Ovary (tissue), 10 donors: ENCODE measurements at regions of chr12 and their contacts with region 1.

Region 1: DNA sequence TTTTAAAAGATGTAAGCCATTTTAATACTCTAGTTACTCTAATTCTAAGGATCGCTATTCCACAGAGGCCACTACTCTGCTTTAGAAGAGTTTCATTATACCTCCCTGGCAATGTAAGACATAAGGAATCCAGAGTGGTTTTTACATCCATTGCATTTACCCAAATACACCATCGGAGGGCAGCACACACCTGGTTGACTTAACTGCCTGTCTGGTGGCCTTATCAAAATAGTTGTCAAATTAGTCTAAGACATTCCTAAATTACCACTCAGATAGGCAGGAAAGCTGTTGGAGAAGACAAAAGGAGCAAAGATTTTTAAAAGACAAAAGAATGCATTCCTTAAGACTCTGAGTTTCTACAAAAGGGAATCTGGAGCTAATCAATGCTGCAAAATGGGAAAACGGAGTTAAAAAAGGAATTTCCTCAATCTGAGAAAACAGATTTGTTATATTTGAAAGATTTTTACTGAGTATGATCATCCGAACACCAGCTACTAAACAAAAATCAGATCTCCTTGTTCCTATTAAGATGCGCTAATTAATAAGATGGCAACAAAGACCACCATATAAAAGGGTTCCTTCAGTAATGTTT is 33.8 kb upstream of the FGD4 start:
- DNase-seq: peak in 3 of 5 donors; percentile 33 to 61 (median 50)
- H3K4me3 ChIP-seq: no peak overlapping the region
- H3K27ac ChIP-seq: no peak overlapping the region
- H3K4me1 ChIP-seq: no peaks in the 10 kb centered on the region
- H3K27me3 ChIP-seq: no peaks in the 10 kb centered on the region
- CTCF ChIP-seq: peak; percentile 65 to 86 (median 73)
- EP300 ChIP-seq: no peak
- POLR2A ChIP-seq: no peak

Region 2: DNA sequence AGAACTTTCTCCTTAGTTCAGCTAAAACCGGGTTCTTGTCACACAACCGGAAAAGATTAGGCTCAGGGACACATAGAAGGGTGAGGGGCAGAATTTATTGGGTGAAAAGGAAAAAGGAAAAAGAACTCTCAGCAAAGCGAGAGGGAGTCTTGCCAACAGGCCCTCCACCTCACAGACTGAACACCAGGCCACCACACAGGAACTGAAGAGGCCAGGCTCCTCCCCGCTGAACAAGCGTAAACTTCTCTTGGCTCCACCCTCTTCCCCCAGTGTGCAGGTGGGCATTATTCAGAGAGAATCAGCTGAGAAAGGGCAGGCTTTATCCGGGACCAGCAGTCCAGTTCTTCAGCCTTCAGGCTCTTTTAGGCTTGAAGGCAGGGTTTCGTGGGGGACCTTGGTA is 91.9 kb before region 1 on chr12:
- intact Hi-C with region 1: no loop called
- DNase-seq: no peak
- H3K4me3 ChIP-seq: no peak overlapping the region
- H3K27ac ChIP-seq: no peak overlapping the region
- H3K4me1 ChIP-seq: peaks cover 6% of the 10 kb centered on the region
- H3K27me3 ChIP-seq: no peaks in the 10 kb centered on the region
- CTCF ChIP-seq: no peak
- EP300 ChIP-seq: no peak
- POLR2A ChIP-seq: no peak

Region 3: DNA sequence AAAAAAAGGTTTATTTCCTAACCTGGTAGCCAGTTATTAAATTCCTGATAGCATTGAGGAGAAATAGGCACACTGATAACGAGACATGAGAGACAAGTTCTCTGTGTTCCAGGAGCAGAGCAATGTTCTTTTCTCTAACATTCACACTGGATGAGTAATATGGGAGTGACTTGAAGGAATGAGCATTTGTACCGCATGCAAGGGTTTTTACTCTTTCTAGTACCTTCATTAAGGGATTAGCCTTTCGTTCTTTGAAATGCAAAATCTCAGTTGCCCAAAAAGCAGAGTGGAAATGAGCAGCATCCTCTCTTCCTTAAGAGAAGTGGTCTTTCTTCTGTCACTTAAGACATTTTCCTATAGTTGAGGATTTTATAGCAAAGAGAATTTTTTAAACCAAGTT is 88.5 kb after region 1 on chr12:
- intact Hi-C with region 1: loop called in 1 of 4 experiments (anchors 5 kb)
- DNase-seq: no peak
- H3K4me3 ChIP-seq: no peak overlapping the region
- H3K27ac ChIP-seq: peak overlapping the region in 1 of 2 donors; percentile 57
- H3K4me1 ChIP-seq: no peaks in the 10 kb centered on the region
- H3K27me3 ChIP-seq: no peaks in the 10 kb centered on the region
- CTCF ChIP-seq: no peak
- EP300 ChIP-seq: no peak
- POLR2A ChIP-seq: no peak

Region 4: DNA sequence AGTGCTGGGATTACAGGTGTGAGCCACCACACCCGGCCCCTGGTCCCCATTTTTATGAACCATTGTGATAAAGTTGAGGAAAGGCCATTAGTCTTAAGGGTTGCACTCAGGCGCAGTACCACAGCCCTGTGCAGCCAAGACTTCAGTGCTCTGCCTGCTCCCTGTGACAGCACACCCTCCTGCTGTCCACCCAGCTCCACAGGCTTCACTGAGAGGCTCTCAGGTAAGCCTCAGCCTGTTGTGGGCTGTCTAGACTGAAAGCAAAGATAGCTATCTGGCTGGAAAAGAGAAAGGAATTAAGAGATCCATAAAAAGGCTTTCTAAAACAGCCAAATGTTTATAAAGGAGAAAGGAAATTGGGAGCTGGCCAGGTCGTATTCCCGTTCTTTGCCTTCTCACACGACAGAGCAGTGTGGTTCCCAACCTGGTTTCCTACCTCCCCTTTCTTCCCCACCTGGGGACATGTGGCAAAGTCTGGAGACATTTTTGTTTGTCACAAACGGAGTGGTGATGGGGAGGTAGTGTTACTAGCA is 294.4 kb after region 1 on chr12:
- intact Hi-C with region 1: loop called in 2 of 4 experiments (anchors 5 to 10 kb)
- DNase-seq: no peak
- H3K4me3 ChIP-seq: no peak overlapping the region
- H3K27ac ChIP-seq: no peak overlapping the region
- H3K4me1 ChIP-seq: no peaks in the 10 kb centered on the region
- H3K27me3 ChIP-seq: no peaks in the 10 kb centered on the region
- CTCF ChIP-seq: no peak
- EP300 ChIP-seq: no peak
- POLR2A ChIP-seq: no peak

Region 5: GRCh38 chr12:32666510-32666909 is 300.9 kb after region 1 on chr12:
- intact Hi-C with region 1: loop called in 3 of 4 experiments (anchors 5 to 10 kb)
- DNase-seq: no peak
- H3K4me3 ChIP-seq: no peak overlapping the region
- H3K27ac ChIP-seq: no peak overlapping the region
- H3K4me1 ChIP-seq: no peaks in the 10 kb centered on the region
- H3K27me3 ChIP-seq: no peaks in the 10 kb centered on the region
- CTCF ChIP-seq: no peak
- EP300 ChIP-seq: no peak
- POLR2A ChIP-seq: no peak

Region 6: DNA sequence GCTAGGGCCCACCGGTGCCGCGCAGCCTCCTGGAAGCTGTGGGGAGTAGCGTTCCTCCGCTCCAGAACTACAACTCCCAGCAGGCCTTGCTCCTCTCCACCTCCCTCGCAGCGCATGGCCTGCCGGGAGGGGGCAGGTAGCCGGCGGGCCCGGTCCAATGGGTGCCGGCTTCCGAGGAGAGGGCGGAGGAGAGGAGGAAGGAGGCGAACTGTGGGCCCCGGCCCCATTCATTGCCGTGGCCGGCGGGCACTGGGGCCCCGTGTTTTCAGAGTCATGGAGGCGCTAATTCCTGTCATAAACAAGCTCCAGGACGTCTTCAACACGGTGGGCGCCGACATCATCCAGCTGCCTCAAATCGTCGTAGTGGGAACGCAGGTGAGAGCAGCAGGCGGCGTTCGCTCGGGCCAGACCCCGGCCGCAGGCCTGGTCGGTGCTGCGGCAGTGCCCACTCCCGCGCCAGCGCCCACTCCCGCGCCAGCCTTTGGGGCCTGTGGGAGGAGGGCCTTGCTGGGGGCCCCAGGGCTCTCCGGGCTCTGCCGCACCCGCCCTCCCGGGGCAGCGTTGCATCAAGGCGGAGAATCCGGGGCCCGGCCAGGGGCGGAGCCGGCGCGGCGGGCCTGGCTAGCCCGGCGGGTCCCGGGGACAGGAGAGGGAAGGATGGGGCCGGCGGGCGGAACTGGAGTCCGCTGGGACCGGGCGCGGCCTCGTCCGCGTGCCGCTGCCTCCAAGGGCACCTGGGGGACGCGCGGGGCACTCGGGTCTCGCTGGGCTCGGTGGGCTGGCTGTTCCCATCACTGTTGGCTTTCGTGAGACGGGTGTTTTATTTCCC is 313.7 kb after region 1 on chr12 and contains the start of gene DNM1L:
- intact Hi-C with region 1: loop called in 1 of 4 experiments (anchors 10 kb)
- DNase-seq: peak; percentile 93 to 94 (median 94)
- H3K4me3 ChIP-seq: peak within 1 kb of the TSS; percentile 99
- H3K27ac ChIP-seq: peak within 1 kb of the TSS; percentile 76 to 90
- H3K4me1 ChIP-seq: no peaks in the 10 kb centered on the region
- H3K27me3 ChIP-seq: no peaks in the 10 kb centered on the region
- CTCF ChIP-seq: peak in 2 of 3 donors; percentile 25 to 45
- EP300 ChIP-seq: no peak
- POLR2A ChIP-seq: peak; percentile 66
- total RNA-seq, gene DNM1L: 46.7 to 77.5 (median 48.5) TPM